ENCODE measurements at regions of chr7 and their contacts with region 1.

Region 1: DNA sequence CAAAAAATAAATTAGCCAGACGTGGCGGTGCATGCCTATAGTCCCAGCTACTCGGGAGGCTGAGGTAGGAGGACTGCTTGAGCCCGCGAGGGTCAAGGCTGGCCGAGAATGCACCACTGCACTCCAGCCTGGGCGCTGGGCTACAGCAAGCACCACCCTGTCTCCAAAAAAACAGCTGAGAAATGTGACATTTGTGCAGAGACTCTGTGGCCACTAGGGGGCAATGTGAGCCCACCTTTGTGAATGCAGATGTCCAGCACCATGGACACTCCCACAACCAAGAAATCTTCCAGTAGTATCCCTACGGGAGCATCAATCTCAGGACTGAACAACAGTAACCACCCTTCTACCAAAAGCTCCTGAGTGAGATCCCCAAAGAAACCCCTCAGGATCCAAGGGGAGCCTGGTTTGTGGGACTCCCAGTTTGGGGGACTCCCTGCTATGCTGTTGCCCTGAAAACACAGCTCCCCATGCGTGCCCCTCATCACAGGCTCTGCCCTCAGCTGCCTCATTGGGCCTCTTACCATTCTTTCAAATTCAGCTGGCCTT is 6.2 kb upstream of the AHCYL2 start:
- DNase-seq: peak; percentile 86 to 89
- ATAC-seq: peak; percentile 88
- H3K4me3 ChIP-seq: no peak overlapping the region
- H3K27ac ChIP-seq: no peak overlapping the region
- H3K4me1 ChIP-seq: no peaks in the 10 kb centered on the region
- H3K27me3 ChIP-seq: no peaks in the 10 kb centered on the region

Region 2: DNA sequence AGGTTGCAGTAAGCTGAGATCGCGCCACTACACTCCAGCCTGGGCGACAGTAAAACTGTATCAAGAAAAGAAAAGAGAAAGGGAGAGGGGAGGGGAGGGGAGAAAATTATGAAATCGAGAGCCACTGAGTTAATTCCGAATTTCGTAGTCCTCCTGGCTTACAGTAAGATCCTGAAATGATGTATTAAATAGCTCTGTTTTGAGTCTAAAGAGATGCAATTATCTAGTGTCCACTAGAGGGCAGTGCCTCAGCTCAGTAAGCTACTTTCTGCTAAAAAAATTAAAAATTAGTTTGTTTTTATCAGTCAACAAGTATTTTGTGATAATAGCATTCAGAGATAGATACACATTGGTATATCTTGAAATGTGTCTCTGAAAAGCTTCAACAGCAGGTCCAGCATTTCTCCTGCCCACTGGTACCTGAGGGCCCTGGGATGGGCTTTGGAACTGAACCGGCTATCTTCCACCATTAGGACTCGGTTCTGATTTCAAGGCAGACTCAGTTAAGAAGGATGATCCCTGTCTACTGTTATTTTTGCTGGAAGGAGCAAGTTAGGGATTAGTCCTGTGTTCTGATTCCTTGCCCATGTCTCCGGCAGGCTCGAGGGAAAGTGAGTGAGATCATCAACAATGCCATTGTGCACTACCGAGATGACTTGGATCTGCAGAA is 54.6 kb before region 1 on chr7:
- intact Hi-C with region 1: no loop called
- DNase-seq: no peak
- ATAC-seq: no peak
- H3K4me3 ChIP-seq: no peak overlapping the region
- H3K27ac ChIP-seq: no peak overlapping the region
- H3K4me1 ChIP-seq: no peaks in the 10 kb centered on the region
- H3K27me3 ChIP-seq: no peaks in the 10 kb centered on the region

Region 3: GRCh38 chr7:129271500-129272355 is 53.1 kb after region 1 on chr7:
- intact Hi-C with region 1: loop called in 1 of 2 experiments (anchors 2 kb)
- DNase-seq: no peak
- ATAC-seq: no peak
- H3K4me3 ChIP-seq: no peak overlapping the region
- H3K27ac ChIP-seq: no peak overlapping the region
- H3K4me1 ChIP-seq: no peaks in the 10 kb centered on the region
- H3K27me3 ChIP-seq: no peaks in the 10 kb centered on the region

Region 4: GRCh38 chr7:129298268-129298893 is 79.8 kb after region 1 on chr7:
- intact Hi-C with region 1: loop called (anchors 2 kb)
- DNase-seq: peak in 1 of 2 donors; percentile 49
- ATAC-seq: no peak
- H3K4me3 ChIP-seq: no peak overlapping the region
- H3K27ac ChIP-seq: no peak overlapping the region
- H3K4me1 ChIP-seq: no peaks in the 10 kb centered on the region
- H3K27me3 ChIP-seq: no peaks in the 10 kb centered on the region

Region 5: DNA sequence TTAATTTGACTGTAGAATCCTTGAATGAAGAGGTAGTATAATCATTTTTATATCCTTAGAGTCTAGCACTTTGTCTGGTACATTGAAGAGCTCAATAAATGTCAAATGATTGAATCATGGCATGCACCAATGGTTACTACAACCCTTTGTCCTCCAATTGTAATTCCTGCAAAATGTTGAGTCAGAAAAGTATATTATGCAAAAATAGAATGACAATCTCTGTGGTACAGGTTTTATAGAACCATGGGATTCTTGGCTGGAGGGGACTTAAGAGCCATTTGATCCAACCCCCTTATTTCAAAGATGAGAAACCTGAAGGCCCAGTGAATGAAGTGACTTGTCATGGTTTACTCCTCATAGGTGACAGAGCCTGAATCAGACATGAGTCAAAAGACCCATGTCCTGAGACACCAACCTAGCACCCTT is 252.8 kb after region 1 on chr7:
- intact Hi-C with region 1: loop called (anchors 5 kb)
- DNase-seq: no peak
- ATAC-seq: no peak
- H3K4me3 ChIP-seq: no peak overlapping the region
- H3K27ac ChIP-seq: no peak overlapping the region
- H3K4me1 ChIP-seq: no peaks in the 10 kb centered on the region
- H3K27me3 ChIP-seq: no peaks in the 10 kb centered on the region